Dendritic cell treated with granulocyte-macrophage colony-stimulating factor and Interleukin-4, amounts not matched to agents 40 ng/mL and 50 ng/mL, for 4 days (primary cell): ENCODE measurements at regions of chrX and their contacts with region 1.

Region 1: DNA sequence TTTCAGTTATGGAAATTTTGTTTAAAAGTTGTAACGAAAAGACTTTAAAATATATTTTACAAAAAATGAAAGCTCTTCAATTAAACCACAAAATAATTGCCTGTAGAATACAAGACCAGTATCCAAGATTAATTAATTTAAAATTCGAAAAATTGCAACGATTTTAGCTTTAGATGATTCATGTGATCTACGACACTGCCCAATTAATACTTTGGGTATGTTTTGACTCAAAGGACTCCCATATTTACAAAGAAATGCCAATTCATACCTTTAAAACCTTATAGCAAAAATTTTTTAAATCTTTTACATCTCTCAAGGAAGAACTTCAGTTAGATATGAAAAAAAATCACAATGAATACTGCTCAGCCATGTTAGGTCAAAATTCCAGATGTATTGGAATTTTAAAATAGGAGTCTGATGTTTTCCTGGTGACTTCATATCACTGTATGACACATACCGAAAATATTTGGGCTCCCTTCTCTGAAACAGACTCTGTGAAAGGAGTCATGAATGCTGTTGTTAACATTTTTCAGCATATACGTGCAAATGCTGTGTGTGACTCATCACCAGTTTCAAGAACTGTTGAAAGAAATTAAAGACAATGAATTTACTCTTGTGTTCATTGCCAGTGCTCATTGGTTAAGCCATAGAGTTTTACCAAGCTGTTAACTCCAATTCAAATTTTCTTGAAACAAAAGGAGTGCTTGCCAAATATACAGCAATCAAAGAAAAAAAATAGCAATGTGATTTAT is 13.8 kb upstream of the SMS start:
- H3K4me3 Mint-ChIP-seq: no peak overlapping the region
- H3K27ac Mint-ChIP-seq: peak overlapping the region; percentile 61
- H3K4me1 Mint-ChIP-seq: peaks cover 24% of the 10 kb centered on the region
- H3K27me3 Mint-ChIP-seq: no peaks in the 10 kb centered on the region

Region 2: DNA sequence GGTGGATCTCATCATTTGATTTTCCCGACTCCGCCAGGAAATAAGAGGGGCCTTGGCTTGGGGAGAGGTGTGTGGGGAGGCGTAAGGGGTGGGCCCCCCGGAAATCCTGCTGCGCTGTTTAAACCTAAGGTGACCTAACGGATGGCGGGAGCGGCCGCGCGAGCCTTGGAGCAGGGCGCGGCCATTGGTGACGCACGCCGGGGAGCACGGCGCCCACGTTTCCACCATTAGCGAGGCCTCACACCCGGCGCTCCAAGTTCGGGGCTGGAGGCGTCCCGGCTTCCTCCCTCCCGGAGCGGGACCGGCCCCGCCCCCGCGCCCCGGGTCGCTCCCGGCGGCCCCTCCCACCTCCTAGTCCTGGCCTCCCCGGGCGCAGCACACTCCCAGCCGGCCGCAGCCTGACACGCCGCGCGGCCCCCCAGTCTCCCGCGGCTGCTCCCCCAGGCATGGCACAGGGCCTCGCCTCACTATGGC is 13.7 kb after region 1 on chrX and contains the start of gene SMS:
- intact Hi-C with region 1: loop called (anchors 2 kb)
- H3K4me3 Mint-ChIP-seq: peak within 1 kb of the TSS; percentile 84
- H3K27ac Mint-ChIP-seq: peak within 1 kb of the TSS; percentile 86
- H3K4me1 Mint-ChIP-seq: peaks cover 24% of the 10 kb centered on the region
- H3K27me3 Mint-ChIP-seq: no peaks in the 10 kb centered on the region